Right ventricle myocardium superior (tissue), 1 donor: ENCODE measurements at regions of chr7 and their contacts with region 1.

Region 1: GRCh38 chr7:15686295-15686956 is at the start of gene MEOX2:
- DNase-seq: peak; percentile 90
- ATAC-seq: peak; percentile 87
- total RNA-seq, gene MEOX2: 7.4 TPM

Region 2: DNA sequence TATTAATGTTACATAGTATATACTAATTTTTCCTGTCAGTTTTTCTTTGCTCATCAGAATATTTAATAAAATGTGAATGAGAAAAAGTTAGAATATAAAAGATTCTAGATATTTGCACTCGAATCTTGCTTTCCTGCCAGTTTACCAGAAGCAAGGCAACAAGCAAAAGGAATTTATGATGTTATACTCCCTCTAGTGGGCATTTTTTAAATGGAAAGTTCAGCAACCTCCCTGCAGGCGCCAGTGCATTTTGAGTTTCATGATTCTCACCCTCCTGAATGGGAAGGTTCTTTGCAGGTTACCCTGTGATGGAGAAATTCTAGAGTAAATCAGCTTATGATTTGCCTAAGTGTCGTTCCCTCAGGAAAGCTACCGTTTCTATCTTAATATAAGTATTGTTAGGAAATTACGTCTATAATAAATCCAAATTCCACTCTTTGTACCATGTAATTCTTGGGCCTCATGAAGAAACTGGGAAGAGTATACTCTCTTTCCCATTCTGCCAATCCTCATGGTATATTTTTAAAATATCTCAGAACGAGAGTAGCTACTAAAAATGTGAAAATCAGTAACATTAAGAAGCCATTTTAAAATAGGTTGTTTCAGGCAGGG is 384.9 kb after region 1 on chr7:
- intact Hi-C with region 1: loop called (anchors 5 kb)
- DNase-seq: no peak
- ATAC-seq: peak; percentile 74